HCT116 (cell line): ENCODE measurements at regions of chr9 and their contacts with region 1.

Region 1: DNA sequence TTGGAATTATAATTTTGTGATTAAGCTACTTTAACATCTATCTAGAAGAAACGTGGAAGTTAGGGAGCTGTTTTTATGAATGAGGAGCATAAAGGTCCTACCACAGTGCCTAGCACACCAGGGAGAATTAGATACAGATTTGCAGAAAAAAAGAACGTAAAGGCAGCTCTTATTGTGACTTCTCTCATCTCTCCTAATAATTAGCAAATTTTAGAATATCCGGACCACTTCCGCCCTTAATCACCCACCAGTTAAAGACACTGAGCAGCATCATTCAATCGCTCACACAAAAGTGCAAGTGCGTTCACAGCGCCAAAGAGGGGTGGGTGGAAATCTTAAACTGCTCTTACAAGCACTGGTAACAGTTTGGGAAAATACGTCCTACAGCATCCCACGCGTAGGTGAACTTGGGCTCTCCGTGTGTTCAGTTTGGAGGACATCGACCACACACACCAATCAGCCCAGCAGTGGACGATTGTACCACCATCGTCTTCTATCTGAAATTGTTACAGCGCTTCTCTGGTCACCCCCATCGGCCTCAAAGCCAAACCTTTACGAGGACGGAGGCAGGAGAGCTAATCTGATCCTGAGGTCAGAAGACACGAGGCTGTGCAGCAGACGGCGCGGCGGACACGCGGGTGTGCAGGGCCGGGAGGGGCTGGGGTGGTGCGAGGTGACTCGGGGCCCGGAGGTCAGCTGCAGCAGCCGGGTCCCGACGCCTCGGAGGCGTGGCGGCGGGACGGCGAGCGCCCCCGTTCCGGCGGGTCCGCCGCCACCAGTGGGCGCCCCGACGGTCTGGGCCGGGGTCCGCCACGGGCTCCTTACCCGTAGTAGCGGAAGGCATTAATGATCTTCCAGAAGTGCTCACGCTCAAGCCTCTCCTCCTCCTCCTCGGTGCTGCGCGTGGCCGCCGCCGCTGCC is 646 bp downstream of the CARNMT1 start:
- DNase-seq: peak; percentile 2
- ATAC-seq: peak; percentile 60
- H3K4me3 ChIP-seq: peak overlapping the region; percentile 82 to 89
- H3K27ac ChIP-seq: peak overlapping the region; percentile 96
- H3K4me1 ChIP-seq: peaks cover 3 to 19% of the 10 kb centered on the region in 2 experiments; a peak in 3 of 4 replicates
- H3K27me3 ChIP-seq: no peaks in the 10 kb centered on the region
- CTCF ChIP-seq: 0 out of 6 replicates have a peak, but pooled peaks of 1 of the 3 experiments have one; percentile 9
- POLR2A ChIP-seq: no peak
- RAD21 ChIP-seq: no peak

Region 2: GRCh38 chr9:75088260-75088905 is 60.9 kb after region 1 on chr9 and contains the start of gene OSTF1:
- CTCF ChIA-PET with region 1: interaction called, 9 read pairs
- POLR2A ChIA-PET with region 1: interaction called, 4 read pairs
- RAD21 ChIA-PET with region 1: no interaction called
- intact Hi-C with region 1: loop called (anchors 1 kb)
- DNase-seq: peak; percentile 90
- ATAC-seq: peak; percentile 90
- H3K4me3 ChIP-seq: peak within 1 kb of the TSS; percentile 78 to 86
- H3K27ac ChIP-seq: peak within 1 kb of the TSS; percentile 91
- H3K4me1 ChIP-seq: peaks cover 14 to 23% of the 10 kb centered on the region in 2 experiments; a peak in 3 of 4 replicates
- H3K27me3 ChIP-seq: no peaks in the 10 kb centered on the region
- CTCF ChIP-seq: no peak
- POLR2A ChIP-seq: peak; percentile 70
- RAD21 ChIP-seq: no peak
- total RNA-seq, gene OSTF1: 20.7 TPM

Region 3: DNA sequence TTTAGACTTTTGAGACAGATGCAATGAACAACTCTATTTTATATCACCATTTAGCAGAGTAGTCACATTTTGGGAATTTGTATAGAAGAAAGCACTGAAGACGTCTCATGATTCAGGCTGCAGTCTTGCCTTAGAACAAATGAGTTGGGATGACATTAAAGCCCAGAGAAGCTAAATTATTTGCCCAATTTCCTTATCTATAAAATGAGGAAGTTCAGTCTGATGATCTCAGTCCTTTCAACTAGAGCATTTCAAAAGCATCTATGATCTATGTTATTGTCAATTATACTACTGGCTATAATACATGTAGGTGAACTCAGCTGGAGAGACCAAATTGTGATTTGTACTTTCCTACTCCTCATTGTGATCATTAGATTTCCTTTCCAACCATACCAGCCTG is 215.0 kb after region 1 on chr9:
- CTCF ChIA-PET with region 1: no interaction called
- POLR2A ChIA-PET with region 1: no interaction called
- RAD21 ChIA-PET with region 1: no interaction called
- intact Hi-C with region 1: no loop called
- DNase-seq: no peak
- ATAC-seq: no peak
- H3K4me3 ChIP-seq: no peak overlapping the region
- H3K27ac ChIP-seq: no peak overlapping the region
- H3K4me1 ChIP-seq: no peaks in the 10 kb centered on the region
- H3K27me3 ChIP-seq: no peaks in the 10 kb centered on the region
- CTCF ChIP-seq: no peak
- POLR2A ChIP-seq: no peak
- RAD21 ChIP-seq: no peak

Region 4: GRCh38 chr9:75289332-75289731 is 261.9 kb after region 1 on chr9:
- CTCF ChIA-PET with region 1: no interaction called
- POLR2A ChIA-PET with region 1: no interaction called
- RAD21 ChIA-PET with region 1: no interaction called
- intact Hi-C with region 1: no loop called
- DNase-seq: no peak
- ATAC-seq: no peak
- H3K4me3 ChIP-seq: no peak overlapping the region
- H3K27ac ChIP-seq: no peak overlapping the region
- H3K4me1 ChIP-seq: no peaks in the 10 kb centered on the region
- H3K27me3 ChIP-seq: peaks cover 4% of the 10 kb centered on the region
- CTCF ChIP-seq: no peak
- POLR2A ChIP-seq: no peak
- RAD21 ChIP-seq: no peak